ENCODE measurements at regions of chr2 and their contacts with region 1.

Region 1: GRCh38 chr2:217785544-217786045 is 217.2 kb downstream of the TNS1 start:
- DNase-seq: peak in 1 of 2 donors; percentile 74
- ATAC-seq: peak; percentile 28 to 37
- H3K4me3 ChIP-seq: no peak overlapping the region
- H3K27ac ChIP-seq: no peak overlapping the region
- H3K4me1 ChIP-seq: peaks cover 11 to 15% of the 10 kb centered on the region in 2 donors
- H3K27me3 ChIP-seq: no peaks in the 10 kb centered on the region
- CTCF ChIP-seq: peak; percentile 96 to 97 (median 97)
- POLR2A ChIP-seq: no peak

Region 2: DNA sequence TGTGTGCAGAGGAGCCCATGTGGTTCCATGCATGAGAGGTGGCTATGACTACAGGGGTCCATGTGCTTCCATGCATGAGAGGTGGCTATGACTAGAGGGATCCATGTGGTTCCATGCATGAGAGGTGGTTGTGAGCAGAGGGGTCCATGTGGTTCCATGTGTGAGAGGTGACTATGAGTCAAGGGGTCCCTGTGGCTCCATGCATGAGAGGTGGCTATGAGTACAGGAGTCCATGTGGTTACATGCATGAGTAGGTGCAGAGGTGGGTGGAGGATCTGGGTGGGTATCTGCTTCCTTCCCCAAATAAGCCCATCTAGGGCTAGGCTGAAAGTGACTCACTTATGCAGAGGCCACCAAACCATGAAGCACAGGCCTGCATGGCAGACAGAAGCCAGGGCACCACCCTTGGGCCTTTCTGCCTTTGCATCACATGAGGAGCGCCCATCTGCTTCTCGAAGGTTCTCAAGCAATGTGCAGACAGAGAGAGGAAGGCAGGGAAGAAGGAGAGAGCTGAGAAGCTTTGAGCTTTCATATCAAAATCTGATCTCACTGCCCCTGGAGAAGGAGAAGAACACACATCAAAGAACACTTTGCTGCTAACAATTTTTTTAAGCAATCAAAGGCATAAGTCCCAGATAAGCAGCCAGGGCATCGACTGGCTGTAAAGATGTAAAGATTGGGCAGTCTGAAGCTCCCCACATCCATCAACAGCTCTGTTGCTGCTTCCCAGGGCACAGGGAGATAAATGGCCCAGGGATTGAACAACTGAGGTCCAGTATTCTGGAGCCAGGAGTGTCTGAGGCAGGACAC is 79.6 kb after region 1 on chr2:
- in situ Hi-C with region 1: loop called in 1 of 4 experiments (anchors 5 kb)
- intact Hi-C with region 1: loop called (anchors 5 kb)
- DNase-seq: peak in 1 of 2 donors; percentile 12
- ATAC-seq: no peak
- H3K4me3 ChIP-seq: no peak overlapping the region
- H3K27ac ChIP-seq: peak overlapping the region; percentile 77 to 87 (median 85)
- H3K4me1 ChIP-seq: peaks cover 74 to 83% of the 10 kb centered on the region in 2 donors
- H3K27me3 ChIP-seq: no peaks in the 10 kb centered on the region
- CTCF ChIP-seq: no peak
- POLR2A ChIP-seq: no peak

Region 3: GRCh38 chr2:217880287-217880889 is 94.8 kb after region 1 on chr2:
- in situ Hi-C with region 1: loop called (anchors 5 kb)
- intact Hi-C with region 1: no loop called
- DNase-seq: no peak
- ATAC-seq: no peak
- H3K4me3 ChIP-seq: no peak overlapping the region
- H3K27ac ChIP-seq: peak overlapping the region; percentile 3 to 41 (median 24)
- H3K4me1 ChIP-seq: peaks cover 5 to 12% of the 10 kb centered on the region in 2 donors
- H3K27me3 ChIP-seq: no peaks in the 10 kb centered on the region
- CTCF ChIP-seq: no peak
- POLR2A ChIP-seq: no peak

Region 4: DNA sequence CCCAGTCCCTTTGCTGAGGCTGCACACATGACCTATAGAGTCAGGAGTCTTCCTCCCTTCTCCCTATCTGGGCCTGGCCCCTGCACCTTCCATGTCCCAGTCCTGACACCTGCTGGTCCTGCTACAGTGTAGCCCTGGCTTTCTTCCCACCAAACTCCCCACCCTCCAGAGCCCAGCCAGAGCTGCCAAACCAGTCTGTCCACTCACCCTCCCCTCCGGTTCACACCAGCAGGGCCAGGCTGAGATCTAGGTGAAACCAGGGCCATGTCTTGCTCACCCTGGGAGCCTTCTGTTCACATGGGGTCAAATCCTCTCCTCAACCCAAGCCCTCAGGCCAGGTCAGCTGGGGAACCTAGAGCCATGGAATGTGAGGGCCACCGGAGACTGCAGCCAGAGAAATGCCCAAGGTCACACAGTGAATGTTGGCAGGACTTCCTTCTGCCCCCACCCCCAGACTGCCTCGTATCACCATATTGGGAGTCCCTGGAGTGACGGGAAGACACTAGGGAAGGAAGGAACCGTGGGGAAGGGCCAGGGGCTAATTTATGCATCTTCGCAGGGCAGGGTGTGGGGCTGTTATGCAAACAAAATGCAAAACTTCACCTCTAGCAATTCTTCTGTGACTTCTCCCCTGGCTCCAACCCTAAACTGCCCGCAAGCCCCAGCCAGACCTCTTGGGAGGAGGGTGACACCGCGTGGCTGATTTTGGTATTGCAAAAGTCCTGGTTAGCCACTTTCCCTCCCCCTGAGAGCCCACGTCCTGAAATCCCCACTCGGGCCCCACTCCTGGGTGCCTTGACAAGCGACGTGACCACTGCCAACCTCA is 202.6 kb after region 1 on chr2:
- in situ Hi-C with region 1: loop called (anchors 5 kb)
- intact Hi-C with region 1: loop called (anchors 1 kb)
- DNase-seq: peak; percentile 72 to 85
- ATAC-seq: peak; percentile 73 to 80
- H3K4me3 ChIP-seq: peak overlapping the region in 1 of 4 donors; percentile 2
- H3K27ac ChIP-seq: peak overlapping the region; percentile 65 to 78 (median 72)
- H3K4me1 ChIP-seq: peaks cover 20 to 23% of the 10 kb centered on the region in 2 donors
- H3K27me3 ChIP-seq: no peaks in the 10 kb centered on the region
- CTCF ChIP-seq: peak; percentile 92 to 97 (median 95)
- POLR2A ChIP-seq: no peak

Region 5: GRCh38 chr2:218046238-218046637 is 260.6 kb after region 1 on chr2:
- in situ Hi-C with region 1: loop called in 1 of 4 experiments (anchors 10 kb)
- intact Hi-C with region 1: no loop called
- DNase-seq: no peak
- ATAC-seq: peak in 1 of 2 donors; percentile 51
- H3K4me3 ChIP-seq: no peak overlapping the region
- H3K27ac ChIP-seq: no peak overlapping the region
- H3K4me1 ChIP-seq: no peaks in the 10 kb centered on the region
- H3K27me3 ChIP-seq: no peaks in the 10 kb centered on the region
- CTCF ChIP-seq: no peak
- POLR2A ChIP-seq: no peak

Measured in gastrocnemius medialis (tissue), 4 donors.